ENCODE measurements at regions of chr7 and their contacts with region 1.

Region 1: DNA sequence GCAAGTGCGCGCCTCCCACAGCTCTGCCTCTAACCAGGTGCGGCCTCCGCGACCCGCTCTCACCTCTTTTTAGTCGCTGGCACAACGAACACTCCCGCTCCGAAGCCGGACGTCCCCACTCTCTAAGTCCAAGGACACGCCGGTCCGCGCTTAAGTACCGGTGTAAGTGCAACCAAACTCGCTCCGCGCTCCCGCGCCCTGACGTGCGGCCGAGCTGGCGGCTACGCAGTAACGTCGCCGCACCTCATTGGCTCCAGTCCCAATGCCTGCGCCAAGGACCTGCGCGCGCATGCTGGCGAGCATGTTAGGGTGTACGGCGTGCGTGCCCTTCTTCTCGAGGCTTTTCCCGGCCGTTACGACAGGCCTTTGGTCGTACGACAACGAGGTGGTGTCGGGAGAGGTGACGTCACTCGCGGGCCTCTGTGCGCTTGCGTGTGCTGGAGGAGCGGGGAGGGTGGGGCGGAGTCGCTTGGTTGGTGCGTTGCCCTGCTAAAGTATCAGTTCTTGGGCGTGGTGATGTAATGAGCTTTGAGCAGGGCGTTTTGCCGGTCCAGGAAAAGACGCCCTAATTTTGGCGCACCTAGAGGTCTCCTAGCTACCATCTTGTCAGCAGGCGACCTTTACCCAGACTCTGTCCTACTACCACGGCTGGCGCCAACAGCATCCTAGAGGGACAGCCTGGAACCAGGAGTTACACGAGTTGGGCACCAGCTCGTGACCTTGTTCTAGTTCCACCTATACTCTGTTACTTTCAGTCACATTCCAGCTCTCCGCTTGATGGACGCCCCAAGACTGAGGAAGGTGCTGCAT is at the start of gene CYCS:
- DNase-seq: peak; percentile 100
- H3K4me3 Mint-ChIP-seq: peak within 1 kb of the TSS; percentile 93
- H3K27ac Mint-ChIP-seq: peak within 1 kb of the TSS; percentile 97
- H3K4me1 Mint-ChIP-seq: peaks cover 33% of the 10 kb centered on the region
- H3K27me3 Mint-ChIP-seq: peaks cover 2% of the 10 kb centered on the region
- total RNA-seq, gene CYCS: 108 to 111 TPM

Region 2: GRCh38 chr7:24757353-24758275 is 367.7 kb before region 1 on chr7 and contains the start of gene GSDME:
- CTCF ChIA-PET with region 1: interaction called, 3 read pairs
- POLR2A ChIA-PET with region 1: interaction called, 10 read pairs
- DNase-seq: peak; percentile 36
- H3K4me3 Mint-ChIP-seq: peak within 1 kb of the TSS; percentile 74
- H3K27ac Mint-ChIP-seq: no peak within 1 kb of the TSS
- H3K4me1 Mint-ChIP-seq: peaks cover 25% of the 10 kb centered on the region
- H3K27me3 Mint-ChIP-seq: peaks cover 65% of the 10 kb centered on the region
- total RNA-seq, gene GSDME: 1.7 to 1.8 TPM

Region 3: GRCh38 chr7:25093268-25093826 is 32.0 kb before region 1 on chr7:
- CTCF ChIA-PET with region 1: interaction called, 24 read pairs
- POLR2A ChIA-PET with region 1: interaction called, 5 read pairs
- DNase-seq: peak; percentile 83
- H3K4me3 Mint-ChIP-seq: no peak overlapping the region
- H3K27ac Mint-ChIP-seq: no peak overlapping the region
- H3K4me1 Mint-ChIP-seq: peaks cover 12% of the 10 kb centered on the region
- H3K27me3 Mint-ChIP-seq: peaks cover 12% of the 10 kb centered on the region

Region 4: DNA sequence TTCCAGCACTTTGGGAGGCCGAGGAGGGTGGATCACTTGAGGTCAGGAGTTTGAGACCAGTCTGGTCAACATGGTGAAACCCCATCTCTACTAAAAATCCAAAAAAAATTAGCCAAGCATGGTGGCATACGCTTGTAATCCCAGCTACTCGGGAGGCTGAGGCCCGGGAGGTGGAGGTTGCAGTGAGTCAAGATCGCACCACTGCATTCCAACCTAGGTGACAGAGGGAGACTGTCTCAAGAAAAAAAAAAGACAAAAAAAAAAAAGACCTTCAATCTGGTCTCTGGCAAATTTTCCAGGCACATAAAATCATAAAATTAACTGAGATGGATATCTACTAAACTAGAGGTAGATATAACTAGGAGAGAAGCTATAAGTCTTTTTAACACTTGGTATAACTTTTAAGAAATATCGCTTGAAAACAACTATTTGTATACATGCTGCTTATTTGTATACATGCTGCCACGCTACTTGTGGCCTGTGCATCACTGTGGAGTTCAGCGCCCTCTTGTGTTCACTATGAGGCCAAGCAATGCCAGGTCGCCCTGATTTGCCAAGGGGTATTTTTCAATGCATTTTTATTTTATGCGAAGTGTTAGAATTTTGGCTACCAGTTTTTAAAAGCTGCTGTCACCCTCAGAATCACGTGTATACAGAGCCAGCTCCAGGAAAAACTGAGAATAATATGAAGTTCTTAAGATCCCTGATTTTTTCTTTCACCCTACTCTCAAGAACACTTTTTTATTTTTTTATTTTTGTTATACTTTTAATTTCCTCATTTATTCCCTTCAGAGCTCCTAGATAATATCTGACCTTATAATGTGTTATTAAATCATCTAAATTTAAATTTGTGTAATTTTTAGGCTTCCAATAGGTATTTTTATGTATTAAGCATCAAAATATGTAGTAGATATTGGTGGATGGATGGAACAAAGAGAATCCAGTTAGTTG is 27.0 kb before region 1 on chr7:
- CTCF ChIA-PET with region 1: interaction called, 24 read pairs
- POLR2A ChIA-PET with region 1: interaction called, 16 read pairs
- DNase-seq: peak; percentile 73
- H3K4me3 Mint-ChIP-seq: no peak overlapping the region
- H3K27ac Mint-ChIP-seq: no peak overlapping the region
- H3K4me1 Mint-ChIP-seq: peaks cover 10% of the 10 kb centered on the region
- H3K27me3 Mint-ChIP-seq: peaks cover 12% of the 10 kb centered on the region

Region 5: DNA sequence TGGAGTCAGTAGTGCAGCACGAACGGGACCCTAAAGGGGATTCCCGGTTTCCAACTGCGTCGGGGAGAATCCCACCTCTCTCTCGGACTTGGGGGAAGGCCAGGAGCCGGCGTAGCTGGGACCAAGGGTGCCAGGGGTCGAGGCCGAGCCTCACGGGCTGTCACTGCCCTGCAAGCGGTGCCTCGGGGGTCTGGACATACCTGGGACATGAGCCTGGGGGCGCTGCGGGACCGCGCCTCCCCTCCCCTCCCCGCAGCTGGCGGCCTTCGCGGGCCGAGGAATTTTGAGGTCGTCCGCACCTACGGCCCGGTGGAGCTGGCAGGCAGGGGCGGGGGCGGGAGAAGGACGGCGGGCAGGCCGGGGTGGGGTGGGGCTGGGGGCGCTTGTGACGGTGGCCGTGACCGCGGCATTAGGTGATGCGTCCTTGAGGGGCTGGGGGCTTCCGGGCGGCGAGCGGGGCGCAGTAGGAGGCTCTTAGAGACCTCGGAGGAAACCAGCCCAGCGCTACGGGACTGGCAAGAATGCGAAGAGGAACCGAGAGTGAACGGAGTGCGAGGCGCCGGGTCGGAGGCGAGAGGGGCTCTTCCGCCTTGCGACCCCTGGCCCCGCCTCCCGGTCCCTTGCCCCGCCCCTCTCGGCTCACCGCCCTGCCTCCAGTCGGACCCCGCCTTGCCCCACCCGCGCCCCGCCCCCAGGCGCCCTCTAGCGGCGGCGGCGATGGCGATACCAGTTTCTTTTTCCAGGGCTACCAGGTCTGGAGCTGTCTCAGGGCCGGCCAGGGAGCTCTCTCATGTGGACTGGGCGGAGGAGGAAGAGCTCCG is 54.6 kb after region 1 on chr7:
- CTCF ChIA-PET with region 1: interaction called, 11 read pairs
- POLR2A ChIA-PET with region 1: interaction called, 15 read pairs
- DNase-seq: peak; percentile 95
- H3K4me3 Mint-ChIP-seq: peak overlapping the region; percentile 79
- H3K27ac Mint-ChIP-seq: peak overlapping the region; percentile 74
- H3K4me1 Mint-ChIP-seq: peaks cover 23% of the 10 kb centered on the region
- H3K27me3 Mint-ChIP-seq: peaks cover 15% of the 10 kb centered on the region

Region 6: GRCh38 chr7:25206765-25207164 is 81.4 kb after region 1 on chr7:
- CTCF ChIA-PET with region 1: no interaction called
- POLR2A ChIA-PET with region 1: no interaction called
- DNase-seq: no peak
- H3K4me3 Mint-ChIP-seq: no peak overlapping the region
- H3K27ac Mint-ChIP-seq: no peak overlapping the region
- H3K4me1 Mint-ChIP-seq: peaks cover 1% of the 10 kb centered on the region
- H3K27me3 Mint-ChIP-seq: peaks cover 40% of the 10 kb centered on the region

Measured in activated CD4-positive, alpha-beta memory T cell treated with anti-CD3 and anti-CD28 coated beads, Interleukin-2, amount 10 ng/mL, durations not matched to agents 7 days and 5 days (primary cell).